ENCODE measurements at regions of chr13 and their contacts with region 1.

Region 1: GRCh38 chr13:79393564-79394249 is 12.3 kb downstream of the RBM26 start:
- DNase-seq: peak; percentile 62

Region 2: DNA sequence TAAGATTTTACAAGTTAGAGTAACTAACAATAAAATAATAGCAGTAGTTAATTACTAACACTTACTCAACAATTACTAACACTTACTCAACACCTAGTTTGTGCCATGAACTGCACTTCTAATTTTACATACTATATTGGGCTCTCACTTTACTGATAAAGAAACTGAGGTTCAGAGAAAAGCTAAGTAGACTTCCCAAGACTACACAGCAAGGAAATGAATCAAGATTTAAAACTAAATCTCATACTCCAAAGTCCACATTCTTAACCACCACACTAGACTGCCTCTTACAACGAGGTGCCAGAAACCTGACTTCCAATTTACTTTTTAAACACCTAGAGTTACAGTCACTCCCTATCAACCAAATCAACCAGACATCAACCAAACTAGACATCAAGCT is 12.7 kb before region 1 on chr13:
- CTCF ChIA-PET with region 1: interaction called, 18 read pairs
- POLR2A ChIA-PET with region 1: no interaction called
- DNase-seq: no peak

Region 3: DNA sequence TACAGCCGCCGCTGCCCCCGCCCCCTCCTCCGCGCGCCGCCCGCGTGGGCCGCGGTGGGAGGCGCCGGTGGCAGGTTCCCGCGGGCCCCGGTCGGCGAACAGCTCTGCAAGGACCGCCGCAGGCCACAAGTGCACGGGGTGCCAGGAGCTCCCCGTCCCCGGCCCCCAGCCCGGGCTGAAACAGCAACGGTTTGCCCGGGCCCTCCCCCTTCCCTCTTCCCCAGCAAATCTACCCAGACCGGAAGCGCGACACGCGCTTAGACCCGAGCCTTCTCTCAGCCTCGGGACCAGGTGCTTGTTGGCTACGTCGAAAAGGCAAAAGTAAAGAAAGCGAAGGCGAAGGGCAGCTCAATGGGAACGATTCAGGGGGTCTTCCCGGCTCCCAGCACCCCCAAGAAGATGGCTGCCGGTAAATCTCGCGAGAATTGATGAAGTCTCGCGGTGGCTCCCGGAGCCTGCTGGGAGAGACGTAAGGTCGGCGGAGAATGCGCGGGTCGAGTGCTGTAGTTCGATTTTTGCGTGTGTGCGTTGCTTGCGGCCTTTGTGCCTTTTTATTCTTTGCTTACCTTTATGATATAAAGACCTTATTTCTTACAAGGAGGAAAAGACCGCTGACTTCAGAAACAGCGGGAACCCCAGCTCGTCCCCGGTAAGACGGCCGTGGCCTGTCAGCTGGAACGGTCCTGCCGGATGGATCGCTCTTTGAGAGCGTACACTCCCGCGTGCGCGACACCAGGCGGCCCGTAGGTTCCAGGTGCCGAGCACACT is 12.3 kb after region 1 on chr13 and contains the start of gene RBM26:
- CTCF ChIA-PET with region 1: interaction called, 11 read pairs
- POLR2A ChIA-PET with region 1: interaction called, 26 read pairs
- DNase-seq: peak; percentile 99

Measured in HEK293T (cell line).